Right ventricle myocardium inferior (tissue), 1 donor: ENCODE measurements at regions of chr7 and their contacts with region 1.

Region 1: DNA sequence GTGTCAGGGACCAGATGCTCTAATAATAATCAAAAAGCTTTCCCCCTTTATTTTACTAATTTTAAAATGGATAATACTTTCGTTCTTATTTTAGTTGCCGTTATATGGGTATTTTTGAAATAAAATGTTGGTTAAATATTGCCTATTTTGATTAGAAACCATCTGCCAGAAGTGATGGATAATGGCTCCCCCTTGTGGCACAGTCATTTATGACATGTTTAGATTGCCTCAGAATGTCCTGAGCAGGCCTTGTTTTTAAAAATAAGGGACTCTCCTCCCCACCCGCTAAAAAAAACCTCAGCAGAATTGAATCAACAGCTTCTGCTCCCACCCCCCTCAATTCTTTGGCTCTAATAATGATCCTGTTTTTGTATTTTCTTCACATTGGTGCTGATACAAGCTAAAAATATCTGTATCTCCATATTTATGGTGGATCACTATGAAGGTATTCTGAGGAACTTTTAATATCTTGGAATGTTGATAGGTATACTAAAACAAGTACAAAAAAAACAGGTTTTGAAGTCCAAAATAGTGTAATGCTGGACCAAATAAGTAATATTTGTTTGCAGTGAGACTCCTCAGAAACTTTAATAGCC is 38.8 kb downstream of the TMEM60 start:
- DNase-seq: no peak
- ATAC-seq: peak; percentile 67

Region 2: GRCh38 chr7:77696198-77697028 is 63.0 kb before region 1 on chr7 and contains the start of gene RSBN1L:
- intact Hi-C with region 1: loop called (anchors 10 kb)
- DNase-seq: peak; percentile 99
- ATAC-seq: peak; percentile 99
- total RNA-seq, gene RSBN1L: 8.1 TPM

Region 3: DNA sequence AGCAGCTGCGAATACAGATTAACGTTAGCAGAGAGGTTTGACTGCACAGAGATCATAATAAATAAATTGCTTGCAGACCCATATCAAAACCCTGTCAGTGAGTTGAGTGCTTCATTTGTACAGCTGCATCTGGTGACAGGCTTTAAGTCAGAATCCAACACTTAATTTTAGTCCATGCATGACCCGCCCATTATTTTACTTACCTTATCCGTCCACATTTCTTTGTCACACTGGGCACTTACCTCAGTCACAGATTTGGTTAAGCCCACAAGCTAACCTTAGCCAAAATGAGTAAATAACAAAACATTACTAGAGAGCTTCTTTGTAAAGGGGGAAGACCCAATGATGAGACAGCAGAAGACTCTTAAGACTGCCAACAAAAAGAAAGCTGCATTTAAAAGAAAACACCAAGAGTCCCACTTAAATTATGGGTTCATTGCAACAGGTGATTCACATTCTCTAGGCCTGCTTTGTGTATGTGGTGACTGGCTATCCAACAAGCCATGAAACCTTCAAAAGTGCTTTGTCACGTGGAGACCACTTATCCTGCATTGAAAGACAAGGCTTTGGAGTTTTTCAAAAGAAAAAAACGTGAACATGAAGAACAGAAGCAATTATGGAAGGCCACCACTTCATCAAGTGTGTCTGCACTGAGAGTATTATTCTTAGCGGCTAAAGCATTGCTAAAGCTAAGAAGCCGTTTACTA is 71.4 kb after region 1 on chr7:
- intact Hi-C with region 1: no loop called
- DNase-seq: no peak
- ATAC-seq: no peak

Region 4: DNA sequence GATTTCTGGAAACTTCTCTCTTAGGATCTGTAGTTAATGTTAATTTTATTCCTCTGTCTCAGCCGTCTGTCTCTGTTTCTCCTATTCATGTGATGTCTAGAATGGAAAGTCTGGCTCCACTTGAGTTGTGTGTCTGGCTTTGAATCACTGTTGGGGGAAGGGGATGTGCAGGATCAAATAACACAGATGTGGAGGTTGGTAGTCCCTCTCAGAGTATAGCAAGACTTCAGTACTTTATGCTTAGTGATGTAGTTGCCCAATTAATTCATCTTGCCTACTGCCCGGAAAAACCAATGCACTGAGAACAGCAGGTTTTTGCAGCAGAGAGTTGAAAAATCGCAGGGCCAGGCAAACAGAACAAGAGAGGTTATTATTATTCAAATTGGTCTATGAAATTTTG is 118.4 kb after region 1 on chr7:
- intact Hi-C with region 1: no loop called
- DNase-seq: no peak
- ATAC-seq: no peak

Region 5: DNA sequence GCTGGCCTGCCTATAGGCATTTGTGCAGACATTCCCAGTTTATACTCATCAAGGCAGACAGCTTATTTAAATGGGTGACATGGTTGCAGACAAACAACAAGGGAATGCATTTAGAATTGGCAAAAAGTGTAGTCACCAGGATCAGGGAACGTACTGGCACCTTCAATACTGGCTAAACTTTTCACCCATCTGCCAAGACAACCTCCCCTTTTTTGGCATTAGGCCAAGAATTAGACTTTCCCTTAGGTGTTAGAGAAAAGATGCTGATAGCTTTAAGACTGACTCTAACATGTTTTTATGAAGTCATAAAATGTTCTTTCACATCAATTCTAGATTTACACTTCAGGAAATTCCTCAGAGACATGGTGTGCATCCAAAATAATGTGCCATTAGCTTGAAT is 405.1 kb after region 1 on chr7:
- intact Hi-C with region 1: no loop called
- DNase-seq: no peak
- ATAC-seq: peak; percentile 39

Region 6: DNA sequence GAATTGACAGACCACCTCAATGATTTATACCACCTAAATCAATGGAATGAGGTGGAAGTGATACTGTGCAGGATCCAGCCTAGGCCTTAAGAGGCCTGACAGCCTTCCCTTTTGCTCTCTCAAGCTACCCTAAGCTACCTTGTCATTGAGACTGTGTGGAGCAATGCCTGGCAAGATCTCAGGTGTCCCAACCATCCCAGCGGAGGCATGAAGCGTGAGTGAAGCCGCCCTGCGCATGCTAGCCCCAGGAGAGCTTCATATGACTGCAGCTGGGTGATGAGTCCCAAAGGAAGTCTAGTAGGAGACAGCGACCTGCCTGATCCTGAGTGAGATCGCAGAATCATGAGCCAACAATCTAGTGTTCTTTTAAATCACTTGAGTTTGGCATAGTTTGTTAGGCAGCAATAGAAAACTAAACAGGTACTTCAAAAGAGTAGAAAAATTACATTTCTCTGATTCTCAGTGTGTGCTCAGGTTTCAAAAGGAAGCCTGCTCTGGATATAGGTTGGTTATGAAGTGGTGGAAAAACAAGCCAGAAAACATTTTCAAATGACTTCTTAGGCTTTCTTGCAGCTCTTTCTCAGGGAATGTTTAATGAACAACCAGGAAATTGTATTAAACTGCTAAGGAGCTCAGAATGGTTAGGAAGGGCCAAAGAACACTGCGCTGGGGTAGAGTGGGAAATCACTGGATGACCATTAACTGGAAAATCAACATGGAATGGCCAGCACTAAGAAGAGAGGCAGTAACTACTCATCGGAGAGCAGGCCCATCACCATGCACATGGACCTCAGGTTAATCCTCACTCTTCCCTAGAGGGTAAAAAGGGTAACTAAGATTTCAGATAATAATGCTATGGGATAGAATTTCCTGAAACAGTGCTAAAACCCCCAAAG is 574.4 kb after region 1 on chr7:
- intact Hi-C with region 1: no loop called
- DNase-seq: no peak
- ATAC-seq: no peak